ENCODE measurements at regions of chr15 and their contacts with region 1.

Region 1: GRCh38 chr15:73426323-73426994 is 16.5 kb upstream of the REC114 start:
- DNase-seq: no peak
- H3K4me3 ChIP-seq: no peak overlapping the region
- H3K27ac ChIP-seq: no peak overlapping the region
- H3K4me1 ChIP-seq: no peaks in the 10 kb centered on the region
- H3K27me3 ChIP-seq: peaks cover 62% of the 10 kb centered on the region
- CTCF ChIP-seq: no peak

Region 2: DNA sequence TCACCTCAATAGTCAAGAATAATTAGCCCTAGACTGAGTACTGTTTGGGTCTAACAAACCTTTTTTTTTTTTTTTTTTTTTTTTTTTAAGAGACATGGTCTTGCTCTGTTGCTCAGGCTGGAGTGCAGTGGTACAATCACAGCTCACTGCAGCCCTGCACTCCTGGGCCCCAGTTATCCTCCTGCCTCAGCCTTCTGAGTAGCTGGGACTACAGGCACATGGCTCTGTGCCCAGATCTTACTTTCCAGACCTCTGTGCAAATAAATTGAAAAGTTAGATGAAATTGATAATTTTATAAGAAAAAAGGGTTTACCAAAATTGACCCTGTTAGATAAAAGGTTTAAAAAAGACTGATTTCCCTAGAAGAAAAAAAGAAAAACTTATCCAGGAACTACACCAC is 1537.1 kb before region 1 on chr15:
- CTCF ChIA-PET with region 1: no interaction called
- POLR2A ChIA-PET with region 1: interaction called, 14 read pairs
- intact Hi-C with region 1: no loop called
- DNase-seq: no peak
- H3K4me3 ChIP-seq: no peak overlapping the region
- H3K27ac ChIP-seq: no peak overlapping the region
- H3K4me1 ChIP-seq: no peaks in the 10 kb centered on the region
- H3K27me3 ChIP-seq: no peaks in the 10 kb centered on the region
- CTCF ChIP-seq: no peak

Region 3: GRCh38 chr15:74025436-74025835 is 599.0 kb after region 1 on chr15:
- CTCF ChIA-PET with region 1: no interaction called
- POLR2A ChIA-PET with region 1: no interaction called
- intact Hi-C with region 1: no loop called
- DNase-seq: no peak
- H3K4me3 ChIP-seq: no peak overlapping the region
- H3K27ac ChIP-seq: no peak overlapping the region
- H3K4me1 ChIP-seq: no peaks in the 10 kb centered on the region
- H3K27me3 ChIP-seq: no peaks in the 10 kb centered on the region
- CTCF ChIP-seq: no peak

Measured in A673 (cell line).